ENCODE measurements at regions of chr11 and their contacts with region 1.

Region 1: GRCh38 chr11:57667736-57668435 is at the start of gene ZDHHC5:
- DNase-seq: peak; percentile 98 to 100 (median 99)
- H3K4me3 ChIP-seq: peak within 1 kb of the TSS; percentile 73 to 100 (median 96)
- H3K27ac ChIP-seq: peak within 1 kb of the TSS; percentile 93 to 100 (median 99)
- H3K27me3 ChIP-seq: no peaks in the 10 kb centered on the region
- CTCF ChIP-seq: peak in 55 of 56 donors; percentile 19 to 80 (median 60)
- total RNA-seq, gene ZDHHC5: 21.3 to 46.9 (median 34.3) TPM

Region 2: DNA sequence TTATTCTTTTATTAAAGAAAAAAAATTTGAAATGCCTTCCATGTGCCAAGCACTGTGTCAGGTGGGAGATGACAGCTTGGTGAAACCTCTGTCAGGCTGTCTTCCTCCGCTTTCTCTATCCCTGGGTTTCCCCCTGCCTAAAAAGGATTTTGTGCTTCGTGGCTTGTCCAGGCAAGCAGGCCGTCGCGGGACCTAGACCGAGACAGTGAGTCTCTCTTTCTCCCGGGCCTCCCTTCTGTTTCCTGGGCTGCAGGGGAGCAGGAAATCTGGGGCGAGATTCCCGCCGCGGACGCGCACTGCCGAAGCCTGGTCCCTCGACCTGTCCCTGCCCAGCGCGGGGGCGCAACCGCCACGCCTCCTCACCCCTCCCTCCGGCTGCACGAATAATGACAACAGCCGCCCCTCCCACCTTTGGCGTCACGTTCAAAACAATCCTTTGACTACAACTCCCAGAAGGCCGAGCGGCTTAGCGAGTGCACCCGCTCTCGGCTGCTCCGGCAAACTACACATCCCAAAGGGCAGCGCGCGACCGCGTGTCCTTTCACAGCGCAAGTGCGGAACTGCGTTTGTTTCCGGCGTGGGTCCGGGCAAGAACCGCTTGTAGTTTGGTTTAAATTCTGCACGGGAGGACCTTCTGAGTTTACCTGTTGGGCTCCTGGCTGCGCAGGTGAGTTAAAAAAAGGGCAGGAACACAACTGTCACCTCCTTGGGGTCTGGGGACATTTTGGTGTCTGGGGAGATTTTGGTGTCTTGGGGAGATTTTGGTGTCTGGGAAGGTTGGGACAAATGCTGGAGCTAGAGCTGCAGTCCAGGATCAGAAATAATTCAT is 10.5 kb before region 1 on chr11 and contains the start of gene CLP1:
- intact Hi-C with region 1: loop called (anchors 1 kb)
- DNase-seq: peak; percentile 99 to 100 (median 100)
- H3K4me3 ChIP-seq: peak within 1 kb of the TSS; percentile 49 to 94 (median 75)
- H3K27ac ChIP-seq: peak within 1 kb of the TSS; percentile 52 to 98 (median 95)
- H3K27me3 ChIP-seq: no peaks in the 10 kb centered on the region
- CTCF ChIP-seq: peak in 45 of 56 donors; percentile 1 to 67 (median 34)
- total RNA-seq, gene CLP1: 3.3 to 11.0 (median 6.3) TPM

Region 3: GRCh38 chr11:57712256-57713150 is 44.6 kb after region 1 on chr11 and contains the start of gene TMX2:
- intact Hi-C with region 1: loop called (anchors 1 to 2 kb)
- DNase-seq: peak; percentile 85 to 97 (median 94)
- H3K4me3 ChIP-seq: peak within 1 kb of the TSS; percentile 75 to 100 (median 98)
- H3K27ac ChIP-seq: peak within 1 kb of the TSS; percentile 51 to 96 (median 88)
- H3K27me3 ChIP-seq: no peaks in the 10 kb centered on the region
- CTCF ChIP-seq: peak in 15 of 56 donors; percentile 2 to 46 (median 13)
- total RNA-seq, gene TMX2: 68.4 to 114 (median 91.6) TPM

Region 4: GRCh38 chr11:57741132-57742086 is 73.5 kb after region 1 on chr11 and contains the start of gene SELENOH:
- intact Hi-C with region 1: loop called (anchors 2 to 5 kb)
- DNase-seq: peak; percentile 87 to 98 (median 97)
- H3K4me3 ChIP-seq: peak within 1 kb of the TSS; percentile 60 to 98 (median 87)
- H3K27ac ChIP-seq: peak within 1 kb of the TSS; percentile 44 to 96 (median 90)
- H3K27me3 ChIP-seq: no peaks in the 10 kb centered on the region
- CTCF ChIP-seq: peak in 21 of 56 donors; percentile 6 to 52 (median 24)
- total RNA-seq, gene SELENOH: 48.0 to 151 (median 93.6) TPM

Region 5: DNA sequence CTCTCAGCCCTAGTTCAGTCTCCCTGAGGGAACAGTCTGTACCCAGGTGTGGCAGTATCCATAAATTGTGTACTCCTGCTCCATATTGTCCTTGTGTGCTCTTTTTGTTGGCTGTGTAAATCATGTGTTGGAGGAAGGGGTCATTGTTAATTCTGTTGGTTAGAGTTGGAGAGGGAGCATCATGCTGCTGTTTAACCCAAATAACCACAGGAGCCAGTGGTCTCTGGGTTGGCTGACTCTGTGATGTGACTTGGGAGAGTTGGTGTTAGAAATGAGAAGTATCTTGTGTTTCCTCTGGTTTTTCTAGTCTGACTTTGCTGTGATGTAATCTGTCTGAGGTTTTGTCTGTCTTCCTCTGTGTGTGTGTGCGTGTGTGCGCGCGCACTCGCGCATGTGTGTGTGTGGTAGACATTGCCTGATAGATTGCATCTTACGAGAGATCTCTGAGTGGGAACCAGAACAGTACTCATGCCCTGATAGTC is 124.2 kb after region 1 on chr11:
- intact Hi-C with region 1: loop called in 1 of 2 experiments (anchors 5 kb)
- DNase-seq: peak in 3 of 10 donors; percentile 51 to 64 (median 57)
- H3K4me3 ChIP-seq: peak overlapping the region in 1 of 59 donors; percentile 4
- H3K27ac ChIP-seq: peak overlapping the region in 43 of 59 donors; percentile 4 to 76 (median 49)
- H3K27me3 ChIP-seq: no peaks in the 10 kb centered on the region
- CTCF ChIP-seq: no peak